CD8-positive, alpha-beta T cell (primary cell): ENCODE measurements at regions of chr19 and their contacts with region 1.

Region 1: DNA sequence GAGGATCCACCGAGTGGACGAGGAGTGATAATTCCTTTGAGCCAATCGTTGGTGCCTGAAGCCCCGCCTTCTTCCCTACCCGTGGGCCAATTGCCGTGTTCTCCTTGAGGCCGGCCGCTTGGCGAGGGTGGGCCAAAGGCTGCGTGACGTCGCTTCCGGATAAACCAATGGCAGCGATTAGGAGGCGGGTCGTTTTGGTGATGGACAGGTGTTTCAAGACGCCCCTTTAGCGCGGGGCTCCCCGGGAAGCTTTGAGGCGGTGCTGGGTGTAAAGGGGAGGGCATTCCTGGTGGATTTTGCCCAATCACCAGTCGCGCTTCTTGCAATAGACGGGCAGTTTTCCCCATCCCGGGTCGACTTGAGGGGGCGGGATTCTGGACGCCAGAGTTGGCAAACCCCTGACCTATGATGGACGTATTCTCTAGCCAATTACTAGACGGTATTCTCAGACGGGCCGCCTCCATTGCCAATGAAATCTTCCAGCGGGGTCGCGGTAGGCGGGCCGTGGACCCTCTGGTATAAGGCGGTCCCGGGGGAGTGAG is 310 bp upstream of the PRMT1 start:
- DNase-seq: peak; percentile 96 to 100 (median 98)
- ATAC-seq: peak; percentile 75
- H3K4me3 ChIP-seq: peak overlapping the region; percentile 83 to 99
- H3K4me3 Mint-ChIP-seq: peak overlapping the region; percentile 99
- H3K27ac ChIP-seq: peak overlapping the region; percentile 86 to 99
- H3K27ac Mint-ChIP-seq: peak overlapping the region; percentile 99
- H3K4me1 ChIP-seq: peaks cover 40% of the 10 kb centered on the region
- H3K4me1 Mint-ChIP-seq: peaks cover 43% of the 10 kb centered on the region
- H3K27me3 ChIP-seq: no peaks in the 10 kb centered on the region
- H3K27me3 Mint-ChIP-seq: no peaks in the 10 kb centered on the region
- CTCF ChIP-seq: no peak

Region 2: DNA sequence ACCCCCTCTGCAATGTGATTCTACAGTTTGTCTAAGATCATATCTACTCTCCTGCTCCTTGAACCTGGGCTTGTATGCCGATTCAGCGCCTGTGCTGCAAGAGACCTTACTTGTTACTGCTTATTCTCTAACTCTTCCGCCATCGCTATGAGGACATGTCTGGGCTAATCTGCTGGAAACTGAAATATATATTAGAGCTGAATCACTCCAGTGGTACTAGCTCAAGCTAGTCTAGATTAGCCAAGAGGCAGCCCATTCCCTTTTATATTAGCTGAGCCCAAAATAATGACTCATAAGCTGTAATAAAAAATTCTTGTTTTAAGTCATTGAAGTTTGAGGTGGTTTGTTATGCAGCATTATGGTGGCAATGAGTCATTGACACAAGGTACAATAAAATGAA is 404.6 kb before region 1 on chr19:
- CTCF ChIA-PET with region 1: no interaction called
- POLR2A ChIA-PET with region 1: no interaction called
- intact Hi-C with region 1: loop called (anchors 2 kb)
- DNase-seq: no peak
- ATAC-seq: no peak
- H3K4me3 ChIP-seq: no peak overlapping the region
- H3K4me3 Mint-ChIP-seq: no peak overlapping the region
- H3K27ac ChIP-seq: no peak overlapping the region
- H3K27ac Mint-ChIP-seq: no peak overlapping the region
- H3K4me1 ChIP-seq: no peaks in the 10 kb centered on the region
- H3K4me1 Mint-ChIP-seq: no peaks in the 10 kb centered on the region
- H3K27me3 ChIP-seq: no peaks in the 10 kb centered on the region
- H3K27me3 Mint-ChIP-seq: peaks cover 13% of the 10 kb centered on the region
- CTCF ChIP-seq: no peak

Region 3: DNA sequence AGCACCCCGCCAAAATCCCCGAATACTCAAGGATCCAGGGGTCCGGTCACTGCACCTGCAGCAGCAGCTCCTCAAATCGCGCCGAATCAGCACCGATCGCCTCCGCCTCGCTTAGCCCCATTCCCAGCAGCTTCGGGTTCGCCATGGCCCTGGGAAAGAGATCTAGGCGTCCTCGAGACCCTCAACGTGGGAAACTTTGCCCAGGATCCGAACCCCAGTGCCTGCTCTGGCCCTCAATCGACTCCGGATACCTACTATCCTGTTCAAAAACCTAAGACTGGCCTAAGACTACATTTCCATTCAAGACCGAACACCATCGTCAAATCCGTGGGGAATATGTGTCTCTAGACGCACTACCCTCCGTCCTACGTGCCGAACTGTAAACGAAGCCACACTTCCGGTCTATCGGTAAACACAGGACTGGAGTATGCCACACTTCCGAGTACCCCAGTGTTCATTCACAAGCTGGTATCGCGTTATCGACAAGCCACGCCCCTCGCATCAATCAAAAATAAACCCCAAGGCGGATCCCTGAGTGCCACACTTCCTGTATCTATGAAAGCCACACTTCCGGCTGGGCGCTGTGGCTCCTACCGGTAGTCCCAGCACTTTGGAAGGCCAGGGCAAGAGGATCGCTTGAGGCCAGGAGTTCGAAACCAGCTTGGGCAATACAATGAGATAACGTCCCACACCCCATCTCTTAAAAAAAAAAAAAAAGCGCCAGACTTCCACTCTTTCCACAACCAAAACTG is 225.2 kb before region 1 on chr19 and contains the start of gene PIH1D1:
- CTCF ChIA-PET with region 1: no interaction called
- POLR2A ChIA-PET with region 1: interaction called, 4 read pairs
- intact Hi-C with region 1: loop called (anchors 2 kb)
- DNase-seq: peak; percentile 86 to 99 (median 94)
- ATAC-seq: peak; percentile 66
- H3K4me3 ChIP-seq: peak within 1 kb of the TSS; percentile 87 to 94
- H3K4me3 Mint-ChIP-seq: peak within 1 kb of the TSS; percentile 99
- H3K27ac ChIP-seq: peak within 1 kb of the TSS; percentile 89 to 96
- H3K27ac Mint-ChIP-seq: peak within 1 kb of the TSS; percentile 99
- H3K4me1 ChIP-seq: peaks cover 31% of the 10 kb centered on the region
- H3K4me1 Mint-ChIP-seq: peaks cover 50% of the 10 kb centered on the region
- H3K27me3 ChIP-seq: no peaks in the 10 kb centered on the region
- H3K27me3 Mint-ChIP-seq: no peaks in the 10 kb centered on the region
- CTCF ChIP-seq: no peak
- total RNA-seq, gene PIH1D1: 113 to 119 TPM

Region 4: GRCh38 chr19:49502866-49503581 is 173.7 kb before region 1 on chr19:
- CTCF ChIA-PET with region 1: interaction called, 68 read pairs
- POLR2A ChIA-PET with region 1: interaction called, 11 read pairs
- intact Hi-C with region 1: loop called (anchors 1 kb)
- DNase-seq: peak in 6 of 9 experiments; percentile 43 to 80 (median 58)
- ATAC-seq: no peak
- H3K4me3 ChIP-seq: no peak overlapping the region
- H3K4me3 Mint-ChIP-seq: no peak overlapping the region
- H3K27ac ChIP-seq: peak overlapping the region in 1 of 2 experiments; percentile 98
- H3K27ac Mint-ChIP-seq: peak overlapping the region; percentile 75
- H3K4me1 ChIP-seq: peaks cover 42% of the 10 kb centered on the region
- H3K4me1 Mint-ChIP-seq: peaks cover 40% of the 10 kb centered on the region
- H3K27me3 ChIP-seq: no peaks in the 10 kb centered on the region
- H3K27me3 Mint-ChIP-seq: no peaks in the 10 kb centered on the region
- CTCF ChIP-seq: peak; percentile 67

Region 5: DNA sequence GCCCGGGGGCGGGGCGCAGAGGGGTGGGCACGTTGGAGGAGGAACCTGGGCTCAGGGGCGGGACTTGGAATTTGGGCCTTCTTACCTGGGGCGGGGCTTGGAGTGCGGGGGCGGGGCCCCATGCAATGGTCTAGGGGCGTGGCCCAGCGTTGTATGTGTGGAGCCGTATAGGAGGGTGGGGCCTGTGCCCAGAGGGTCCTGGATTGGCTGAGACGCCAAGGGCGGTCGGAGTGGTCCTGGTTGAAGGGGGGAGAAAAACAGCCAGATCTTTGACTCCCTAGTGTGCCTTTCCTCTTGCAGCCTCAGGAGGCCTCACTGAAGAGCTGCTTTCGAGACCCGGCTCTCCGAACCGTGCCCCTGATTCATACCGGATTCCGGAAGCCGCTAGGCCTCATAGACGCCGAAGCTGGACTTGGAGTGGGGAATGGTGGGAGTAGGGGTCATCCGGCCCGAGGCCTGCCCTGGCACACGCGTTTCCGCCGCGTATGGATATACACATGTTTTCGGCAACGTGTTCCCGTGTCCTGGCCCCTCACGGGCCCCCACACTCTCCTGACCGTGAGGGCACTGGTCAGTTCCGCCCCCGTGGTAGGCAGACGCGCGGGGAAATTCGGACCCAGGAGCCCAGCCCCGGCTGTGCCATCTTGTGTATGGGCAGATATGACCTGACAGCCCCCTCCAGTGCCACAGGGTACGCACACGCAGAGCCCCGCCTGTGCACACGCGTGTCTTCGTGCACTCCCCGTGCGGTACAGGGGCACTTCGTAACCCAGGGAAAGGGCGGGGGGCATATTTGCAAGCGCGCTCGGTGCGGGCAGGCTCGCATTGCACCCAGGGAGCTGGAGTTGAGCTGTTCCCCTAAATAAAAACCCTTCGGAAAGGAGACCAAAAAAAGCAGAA is 86.4 kb before region 1 on chr19:
- CTCF ChIA-PET with region 1: interaction called, 5 read pairs
- POLR2A ChIA-PET with region 1: interaction called, 14 read pairs
- intact Hi-C with region 1: loop called (anchors 1 kb)
- DNase-seq: peak; percentile 90 to 98 (median 94)
- ATAC-seq: peak; percentile 77
- H3K4me3 ChIP-seq: peak overlapping the region; percentile 78 to 97
- H3K4me3 Mint-ChIP-seq: peak overlapping the region; percentile 91
- H3K27ac ChIP-seq: peak overlapping the region; percentile 82 to 83
- H3K27ac Mint-ChIP-seq: peak overlapping the region; percentile 91
- H3K4me1 ChIP-seq: peaks cover 23% of the 10 kb centered on the region
- H3K4me1 Mint-ChIP-seq: peaks cover 36% of the 10 kb centered on the region
- H3K27me3 ChIP-seq: no peaks in the 10 kb centered on the region
- H3K27me3 Mint-ChIP-seq: no peaks in the 10 kb centered on the region
- CTCF ChIP-seq: peak; percentile 29

Region 6: GRCh38 chr19:49655570-49656455 is 20.9 kb before region 1 on chr19:
- CTCF ChIA-PET with region 1: interaction called, 28 read pairs
- POLR2A ChIA-PET with region 1: interaction called, 4 read pairs
- intact Hi-C with region 1: no loop called
- DNase-seq: peak in 3 of 9 experiments; percentile 20 to 47 (median 28)
- ATAC-seq: no peak
- H3K4me3 ChIP-seq: no peak overlapping the region
- H3K4me3 Mint-ChIP-seq: no peak overlapping the region
- H3K27ac ChIP-seq: peak overlapping the region in 1 of 2 experiments; percentile 50
- H3K27ac Mint-ChIP-seq: peak overlapping the region; percentile 13
- H3K4me1 ChIP-seq: no peaks in the 10 kb centered on the region
- H3K4me1 Mint-ChIP-seq: peaks cover 5% of the 10 kb centered on the region
- H3K27me3 ChIP-seq: no peaks in the 10 kb centered on the region
- H3K27me3 Mint-ChIP-seq: no peaks in the 10 kb centered on the region
- CTCF ChIP-seq: no peak

Region 7: DNA sequence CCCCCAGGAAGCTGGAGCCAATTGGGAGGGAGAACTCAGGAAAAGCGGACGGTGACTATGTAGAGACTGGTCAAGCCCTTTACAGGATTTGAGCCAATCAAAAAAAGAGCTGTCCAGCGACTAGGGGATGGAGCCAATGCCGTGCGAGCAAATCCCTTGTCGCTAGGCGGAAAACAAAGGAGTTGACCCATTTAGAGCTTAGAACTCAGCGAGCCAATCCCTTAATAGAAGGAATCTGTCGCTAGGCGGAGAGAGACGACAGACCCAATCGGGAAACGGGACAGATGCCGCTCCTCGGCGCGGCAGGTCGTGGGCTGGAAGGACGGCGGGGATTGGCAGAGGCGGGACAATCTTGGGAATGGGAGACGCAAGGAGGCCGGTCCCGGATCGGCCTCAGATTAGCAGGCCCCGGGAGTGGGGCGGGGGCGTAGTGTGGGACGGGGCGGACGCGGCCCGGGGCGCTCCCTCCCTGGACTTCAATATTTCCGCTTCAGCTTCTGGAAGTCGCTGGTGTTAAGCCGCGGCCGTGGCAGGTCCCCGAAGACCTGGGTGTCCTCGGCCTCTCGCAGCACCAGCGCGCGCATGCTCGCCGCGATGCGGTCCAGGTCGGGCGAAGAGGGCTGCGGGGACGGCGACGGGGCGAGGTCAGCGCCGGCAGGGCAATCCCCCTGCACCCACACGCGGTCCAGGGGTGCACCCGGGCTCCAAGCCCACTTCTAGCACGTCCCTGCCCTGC is 192.8 kb after region 1 on chr19:
- CTCF ChIA-PET with region 1: no interaction called
- POLR2A ChIA-PET with region 1: no interaction called
- intact Hi-C with region 1: loop called in 1 of 2 experiments (anchors 5 kb)
- DNase-seq: peak; percentile 81 to 98 (median 89)
- ATAC-seq: peak; percentile 75
- H3K4me3 ChIP-seq: peak overlapping the region; percentile 73 to 85
- H3K4me3 Mint-ChIP-seq: no peak overlapping the region
- H3K27ac ChIP-seq: peak overlapping the region; percentile 64 to 96
- H3K27ac Mint-ChIP-seq: no peak overlapping the region
- H3K4me1 ChIP-seq: peaks cover 36% of the 10 kb centered on the region
- H3K4me1 Mint-ChIP-seq: peaks cover 41% of the 10 kb centered on the region
- H3K27me3 ChIP-seq: no peaks in the 10 kb centered on the region
- H3K27me3 Mint-ChIP-seq: no peaks in the 10 kb centered on the region
- CTCF ChIP-seq: no peak